ENCODE measurements at regions of chr11 and their contacts with region 1.

Region 1: GRCh38 chr11:84261707-84262106 is 975.5 kb upstream of the CCDC90B start:
- DNase-seq: no peak
- ATAC-seq: no peak
- H3K4me3 ChIP-seq: no peak overlapping the region
- H3K27ac ChIP-seq: no peak overlapping the region
- H3K4me1 ChIP-seq: no peaks in the 10 kb centered on the region
- H3K27me3 ChIP-seq: no peaks in the 10 kb centered on the region
- CTCF ChIP-seq: peak in 6 of 12 donors; percentile 9 to 23 (median 20)
- POLR2A ChIP-seq: no peak

Region 2: GRCh38 chr11:83852775-83853442 is 408.8 kb before region 1 on chr11:
- intact Hi-C with region 1: loop called in 1 of 10 experiments (anchors 10 kb)
- DNase-seq: no peak
- ATAC-seq: no peak
- H3K4me3 ChIP-seq: no peak overlapping the region
- H3K27ac ChIP-seq: no peak overlapping the region
- H3K4me1 ChIP-seq: no peaks in the 10 kb centered on the region
- H3K27me3 ChIP-seq: no peaks in the 10 kb centered on the region
- CTCF ChIP-seq: no peak
- POLR2A ChIP-seq: no peak

Region 3: GRCh38 chr11:84372381-84372950 is 110.8 kb after region 1 on chr11:
- intact Hi-C with region 1: no loop called
- DNase-seq: no peak
- ATAC-seq: no peak
- H3K4me3 ChIP-seq: no peak overlapping the region
- H3K27ac ChIP-seq: no peak overlapping the region
- H3K4me1 ChIP-seq: no peaks in the 10 kb centered on the region
- H3K27me3 ChIP-seq: no peaks in the 10 kb centered on the region
- CTCF ChIP-seq: no peak
- POLR2A ChIP-seq: no peak

Region 4: GRCh38 chr11:84512084-84512483 is 250.4 kb after region 1 on chr11:
- intact Hi-C with region 1: no loop called
- DNase-seq: no peak
- ATAC-seq: no peak
- H3K4me3 ChIP-seq: no peak overlapping the region
- H3K27ac ChIP-seq: no peak overlapping the region
- H3K4me1 ChIP-seq: no peaks in the 10 kb centered on the region
- H3K27me3 ChIP-seq: no peaks in the 10 kb centered on the region
- CTCF ChIP-seq: no peak
- POLR2A ChIP-seq: no peak